BJ (cell line): ENCODE measurements at regions of chr15 and their contacts with region 1.

Region 1: DNA sequence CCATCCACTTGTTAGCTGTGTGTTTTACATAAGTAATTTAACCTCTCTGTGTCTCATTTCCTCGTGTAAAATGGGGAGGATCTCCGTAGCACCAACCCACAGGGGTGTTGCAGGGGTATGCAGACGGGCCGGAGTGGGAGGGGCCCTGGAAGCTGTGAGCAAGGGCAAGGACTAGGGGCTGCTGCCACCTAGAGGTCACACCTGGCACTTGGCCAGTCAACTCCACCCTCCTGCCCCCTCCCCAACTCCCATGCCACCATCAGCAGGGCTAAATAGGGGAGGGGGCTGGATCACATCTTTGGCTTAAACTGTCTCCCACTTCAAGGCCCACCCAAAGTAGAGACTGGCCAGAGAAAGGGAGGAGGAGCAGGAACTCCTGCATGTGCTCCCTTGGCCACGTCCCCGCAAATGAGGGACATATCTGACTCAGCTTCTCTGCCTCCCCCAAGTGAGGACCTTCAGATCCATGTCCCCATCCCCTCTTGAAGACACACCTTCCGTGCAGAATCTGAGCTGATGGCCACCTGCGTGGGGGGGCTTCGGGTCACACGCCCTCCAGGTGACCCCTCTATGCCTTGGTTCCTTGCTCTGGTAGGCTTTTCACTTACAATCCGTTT is 2.6 kb downstream of the CCDC9B start:
- DNase-seq: no peak
- H3K4me3 ChIP-seq: no peak overlapping the region
- H3K27me3 ChIP-seq: no peaks in the 10 kb centered on the region
- CTCF ChIP-seq: peak; percentile 74

Region 2: DNA sequence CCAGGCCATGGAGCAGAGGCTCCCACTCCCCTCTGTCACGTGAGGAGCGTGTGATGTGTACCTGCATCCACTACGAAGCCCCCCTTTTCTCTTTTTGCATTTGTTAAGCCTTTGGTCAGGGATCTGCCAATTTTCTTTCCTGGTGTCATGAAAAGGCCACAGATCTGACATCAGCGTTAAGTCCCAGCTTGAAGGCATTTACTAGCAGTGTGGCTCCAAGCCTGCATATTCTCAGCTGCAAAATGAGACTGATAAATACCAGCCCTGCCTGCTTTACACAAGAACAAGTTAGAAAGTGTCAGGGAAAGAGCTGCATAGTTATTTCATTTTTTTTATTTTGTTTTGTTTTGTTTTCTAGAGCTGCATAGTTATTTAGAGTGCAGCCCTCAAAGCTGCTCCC is 53.0 kb before region 1 on chr15:
- CTCF ChIA-PET with region 1: interaction called, 58 read pairs
- POLR2A ChIA-PET with region 1: no interaction called
- DNase-seq: no peak
- H3K4me3 ChIP-seq: no peak overlapping the region
- H3K27me3 ChIP-seq: peaks cover 24% of the 10 kb centered on the region
- CTCF ChIP-seq: no peak

Region 3: GRCh38 chr15:40290918-40291574 is 47.1 kb before region 1 on chr15:
- CTCF ChIA-PET with region 1: interaction called, 13 read pairs
- POLR2A ChIA-PET with region 1: no interaction called
- DNase-seq: no peak
- H3K4me3 ChIP-seq: peak overlapping the region; percentile 27
- H3K27me3 ChIP-seq: peaks cover 16% of the 10 kb centered on the region
- CTCF ChIP-seq: no peak

Region 4: GRCh38 chr15:40313531-40314398 is 24.4 kb before region 1 on chr15:
- CTCF ChIA-PET with region 1: interaction called, 124 read pairs
- POLR2A ChIA-PET with region 1: no interaction called
- DNase-seq: no peak
- H3K4me3 ChIP-seq: no peak overlapping the region
- H3K27me3 ChIP-seq: peaks cover 7% of the 10 kb centered on the region
- CTCF ChIP-seq: no peak

Region 5: GRCh38 chr15:40323239-40323952 is 14.8 kb before region 1 on chr15 and contains the start of gene INAFM2:
- CTCF ChIA-PET with region 1: interaction called, 124 read pairs
- POLR2A ChIA-PET with region 1: interaction called, 17 read pairs
- DNase-seq: peak; percentile 62
- H3K4me3 ChIP-seq: peak within 1 kb of the TSS; percentile 72
- H3K27me3 ChIP-seq: no peaks in the 10 kb centered on the region; the same call in 1 of the 2 replicates
- CTCF ChIP-seq: peak; percentile 64
- polyA plus RNA-seq, gene INAFM2: 7.3 and 12.8 TPM in 2 replicates

Region 6: GRCh38 chr15:40357723-40358470 is 19.7 kb after region 1 on chr15 and contains the start of gene DISP2:
- CTCF ChIA-PET with region 1: interaction called, 112 read pairs
- POLR2A ChIA-PET with region 1: no interaction called
- DNase-seq: no peak
- H3K4me3 ChIP-seq: peak within 1 kb of the TSS; percentile 51
- H3K27me3 ChIP-seq: peaks cover 17% of the 10 kb centered on the region
- CTCF ChIP-seq: no peak
- polyA plus RNA-seq, gene DISP2: 0.16 and 0.23 TPM in 2 replicates

Region 7: GRCh38 chr15:40421246-40422157 is 83.4 kb after region 1 on chr15:
- CTCF ChIA-PET with region 1: interaction called, 37 read pairs
- POLR2A ChIA-PET with region 1: no interaction called
- DNase-seq: no peak
- H3K4me3 ChIP-seq: no peak overlapping the region
- H3K27me3 ChIP-seq: no peaks in the 10 kb centered on the region
- CTCF ChIP-seq: peak; percentile 99